T-cell (primary cell): ENCODE measurements at regions of chr19 and their contacts with region 1.

Region 1: DNA sequence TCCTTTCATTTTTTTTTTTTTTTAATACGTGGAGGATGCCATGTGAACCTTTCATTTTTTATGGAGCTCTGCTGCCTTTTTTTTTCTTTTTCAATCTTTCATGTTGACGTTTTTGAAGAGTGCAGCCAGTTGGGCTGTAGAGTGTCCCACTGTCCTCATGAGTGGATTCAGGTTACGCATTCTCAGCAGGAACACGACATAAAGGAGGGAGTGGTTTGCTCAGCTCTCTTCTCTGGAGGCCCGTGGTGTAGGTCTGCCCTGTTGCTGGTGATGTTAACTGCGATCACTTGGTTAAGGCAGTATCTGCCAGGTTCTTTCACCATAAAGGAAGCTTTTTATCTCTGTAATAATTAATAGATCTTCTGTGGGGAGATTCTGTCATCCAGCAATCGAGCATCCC is 26.7 kb upstream of the CACNG8 start:
- DNase-seq: no peak
- ATAC-seq: no peak
- H3K4me3 ChIP-seq: no peak overlapping the region
- H3K4me3 Mint-ChIP-seq: no peak overlapping the region
- H3K27ac ChIP-seq: no peak overlapping the region
- H3K27ac Mint-ChIP-seq: no peak overlapping the region
- H3K4me1 ChIP-seq: no peaks in the 10 kb centered on the region
- H3K4me1 Mint-ChIP-seq: no peaks in the 10 kb centered on the region
- H3K27me3 ChIP-seq: peaks cover 4 to 11% of the 10 kb centered on the region in 2 experiments
- H3K27me3 Mint-ChIP-seq: peaks cover 26 to 32% of the 10 kb centered on the region in 2 donors

Region 2: GRCh38 chr19:53906211-53907192 is 29.5 kb before region 1 on chr19:
- CTCF ChIA-PET with region 1: interaction called in 1 of 2 experiments, 11 read pairs
- POLR2A ChIA-PET with region 1: no interaction called
- DNase-seq: peak; percentile 22 to 79 (median 61)
- ATAC-seq: peak; percentile 61 to 78 (median 72)
- H3K4me3 ChIP-seq: no peak overlapping the region
- H3K4me3 Mint-ChIP-seq: peak overlapping the region in 1 of 3 donors; percentile 56
- H3K27ac ChIP-seq: no peak overlapping the region
- H3K27ac Mint-ChIP-seq: peak overlapping the region in 1 of 2 donors; percentile 27
- H3K4me1 ChIP-seq: peaks cover 0 to 33% of the 10 kb centered on the region in 2 experiments
- H3K4me1 Mint-ChIP-seq: peaks cover 32 to 46% (median 39%) of the 10 kb centered on the region in 3 donors
- H3K27me3 ChIP-seq: peaks cover 7 to 70% of the 10 kb centered on the region in 2 experiments
- H3K27me3 Mint-ChIP-seq: peaks cover 71 to 84% of the 10 kb centered on the region in 2 donors